HepG2 (cell line): ENCODE measurements at regions of chr11 and their contacts with region 1.

Region 1: DNA sequence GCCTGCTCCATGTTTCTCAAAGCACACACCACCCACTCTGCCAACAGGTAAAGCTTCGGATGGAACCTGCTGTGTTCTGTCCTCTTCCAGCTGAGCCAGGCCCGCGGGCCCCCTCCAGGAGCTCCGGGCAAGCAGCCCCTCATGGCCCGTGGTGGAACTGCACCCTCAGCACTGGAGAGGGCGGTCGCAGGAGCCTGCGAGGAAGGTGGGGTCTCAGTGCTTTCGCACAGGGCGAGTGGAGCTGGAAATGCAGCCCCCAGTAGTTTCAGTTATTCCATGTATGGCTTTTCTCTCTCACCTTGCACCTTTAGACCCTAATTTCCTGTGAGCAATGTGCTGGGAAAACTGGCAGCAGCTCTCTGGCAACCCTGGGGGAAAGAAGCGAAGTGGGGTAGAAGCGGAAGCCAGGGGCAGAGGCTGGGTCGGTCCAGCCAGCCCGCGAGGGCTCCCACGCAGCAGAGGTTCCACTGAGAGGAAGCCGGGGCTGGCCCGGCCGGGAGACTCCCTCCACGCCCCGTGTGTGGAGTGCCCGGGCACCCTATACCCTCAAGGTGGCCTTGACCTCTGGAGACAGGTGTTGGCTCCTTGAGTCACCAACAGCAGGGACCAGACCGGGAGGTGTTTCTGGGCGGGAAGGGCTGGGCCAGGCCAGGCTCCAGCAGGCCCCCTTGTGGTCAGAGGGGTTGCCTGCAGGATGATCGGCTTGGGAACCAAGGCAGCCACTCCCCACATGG is 119.9 kb upstream of the TMEM45B start:
- DNase-seq: peak; percentile 46
- ATAC-seq: peak; percentile 97
- H3K4me3 ChIP-seq: peak overlapping the region; percentile 11 to 69 (median 46)
- H3K27ac ChIP-seq: no peak overlapping the region
- H3K4me1 ChIP-seq: peaks cover 5% of the 10 kb centered on the region; the same call in 1 of the 2 replicates
- H3K27me3 ChIP-seq: peaks cover 2 to 45% of the 10 kb centered on the region in 2 experiments; a peak in 4 of 5 replicates
- CTCF ChIP-seq: peak; percentile 88
- EP300 ChIP-seq: no peak
- POLR2A ChIP-seq: no peak
- RAD21 ChIP-seq: 0 out of 2 replicates have a peak, but pooled peaks have one; percentile 41

Region 2: GRCh38 chr11:129364143-129364654 is 331.5 kb before region 1 on chr11:
- CTCF ChIA-PET with region 1: interaction called, 66 read pairs
- POLR2A ChIA-PET with region 1: no interaction called
- in situ Hi-C with region 1: no loop called
- intact Hi-C with region 1: loop called (anchors 1 kb)
- DNase-seq: peak; percentile 80
- ATAC-seq: peak; percentile 100
- H3K4me3 ChIP-seq: peak overlapping the region in 2 of 3 experiments; percentile 3 to 46; a peak in 2 of 6 replicates
- H3K27ac ChIP-seq: no peak overlapping the region
- H3K4me1 ChIP-seq: peaks cover 12% of the 10 kb centered on the region
- H3K27me3 ChIP-seq: peaks cover 0 to 22% of the 10 kb centered on the region in 2 experiments; a peak in 2 of 5 replicates
- CTCF ChIP-seq: peak; percentile 100
- EP300 ChIP-seq: no peak
- POLR2A ChIP-seq: no peak
- RAD21 ChIP-seq: peak; percentile 95

Region 3: GRCh38 chr11:129375751-129376657 is 319.7 kb before region 1 on chr11 and contains the start of gene BARX2:
- CTCF ChIA-PET with region 1: interaction called, 3 read pairs
- POLR2A ChIA-PET with region 1: no interaction called
- in situ Hi-C with region 1: loop called (anchors 5 kb)
- intact Hi-C with region 1: loop called (anchors 5 kb)
- DNase-seq: peak; percentile 33
- ATAC-seq: peak; percentile 88
- H3K4me3 ChIP-seq: peak within 1 kb of the TSS in 2 of 3 experiments; percentile 37 to 48; a peak in 2 of 6 replicates
- H3K27ac ChIP-seq: no peak within 1 kb of the TSS
- H3K4me1 ChIP-seq: no peaks in the 10 kb centered on the region
- H3K27me3 ChIP-seq: peaks cover 10 to 82% of the 10 kb centered on the region in 2 experiments
- CTCF ChIP-seq: peak; percentile 83
- EP300 ChIP-seq: no peak
- POLR2A ChIP-seq: no peak
- RAD21 ChIP-seq: peak; percentile 64
- total RNA-seq, gene BARX2: not detected in 2 replicates

Region 4: GRCh38 chr11:129440028-129440713 is 255.6 kb before region 1 on chr11:
- CTCF ChIA-PET with region 1: no interaction called
- POLR2A ChIA-PET with region 1: no interaction called
- in situ Hi-C with region 1: no loop called
- intact Hi-C with region 1: no loop called
- DNase-seq: peak; percentile 26
- ATAC-seq: peak; percentile 83
- H3K4me3 ChIP-seq: no peak overlapping the region
- H3K27ac ChIP-seq: no peak overlapping the region
- H3K4me1 ChIP-seq: no peaks in the 10 kb centered on the region
- H3K27me3 ChIP-seq: peaks cover 2 to 10% of the 10 kb centered on the region in 2 experiments; a peak in 3 of 5 replicates
- CTCF ChIP-seq: no peak
- EP300 ChIP-seq: no peak
- POLR2A ChIP-seq: no peak
- RAD21 ChIP-seq: no peak

Region 5: GRCh38 chr11:130580372-130580771 is 884.6 kb after region 1 on chr11:
- CTCF ChIA-PET with region 1: no interaction called
- POLR2A ChIA-PET with region 1: no interaction called
- in situ Hi-C with region 1: no loop called
- intact Hi-C with region 1: no loop called
- DNase-seq: no peak
- ATAC-seq: no peak
- H3K4me3 ChIP-seq: no peak overlapping the region
- H3K27ac ChIP-seq: no peak overlapping the region
- H3K4me1 ChIP-seq: no peaks in the 10 kb centered on the region
- H3K27me3 ChIP-seq: peaks cover 0 to 1% of the 10 kb centered on the region in 2 experiments; a peak in 1 of 5 replicates
- CTCF ChIP-seq: no peak
- EP300 ChIP-seq: no peak
- POLR2A ChIP-seq: no peak
- RAD21 ChIP-seq: no peak